Activated CD4-positive, alpha-beta memory T cell treated with anti-CD3 and anti-CD28 coated beads, Interleukin-2, amount 10 ng/mL, durations not matched to agents 7 days and 5 days (primary cell): ENCODE measurements at regions of chr12 and their contacts with region 1.

Region 1: GRCh38 chr12:100154474-100155247 is 12.0 kb upstream of the BLTP3B start:
- DNase-seq: peak; percentile 79
- H3K4me3 Mint-ChIP-seq: no peak overlapping the region
- H3K27ac Mint-ChIP-seq: peak overlapping the region; percentile 12
- H3K4me1 Mint-ChIP-seq: peaks cover 11% of the 10 kb centered on the region
- H3K27me3 Mint-ChIP-seq: no peaks in the 10 kb centered on the region

Region 2: DNA sequence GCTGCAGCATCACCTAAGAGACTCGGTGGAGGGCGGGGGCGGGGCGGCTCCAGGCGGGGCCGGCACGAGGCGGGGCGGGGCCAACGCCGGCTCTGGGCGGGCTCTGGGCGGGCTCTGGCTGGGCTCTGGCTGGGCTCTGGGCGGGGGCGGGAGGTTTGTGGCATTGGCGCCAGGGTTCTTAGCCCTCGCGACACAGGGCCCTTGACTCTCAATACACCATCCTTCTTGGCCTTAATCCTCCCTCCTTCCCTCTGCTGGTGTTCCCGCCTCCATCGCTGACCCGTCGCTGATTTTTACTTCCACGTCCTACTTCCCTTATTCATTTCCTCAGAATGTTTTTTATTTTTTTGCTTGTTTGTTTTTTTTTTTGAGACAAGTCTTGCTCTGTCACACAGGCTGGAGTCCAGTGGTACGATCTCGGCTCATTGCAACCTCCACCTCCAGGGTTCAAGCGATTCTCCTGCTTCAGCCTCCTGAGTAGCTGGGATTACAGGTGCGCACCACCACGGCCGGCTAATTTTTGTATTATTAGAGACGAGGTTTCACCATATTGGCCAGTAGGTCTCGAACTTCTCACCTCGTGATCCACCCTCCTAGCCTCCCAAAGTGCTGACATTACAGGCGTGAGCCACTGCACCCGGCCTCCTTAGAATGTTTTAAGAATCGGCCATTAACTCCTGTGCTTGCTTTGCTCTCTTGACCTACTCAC is 11.7 kb before region 1 on chr12 and contains the start of gene BLTP3B:
- CTCF ChIA-PET with region 1: interaction called, 39 read pairs
- POLR2A ChIA-PET with region 1: interaction called, 8 read pairs
- DNase-seq: peak; percentile 92
- H3K4me3 Mint-ChIP-seq: peak within 1 kb of the TSS; percentile 83
- H3K27ac Mint-ChIP-seq: peak within 1 kb of the TSS; percentile 95
- H3K4me1 Mint-ChIP-seq: peaks cover 43% of the 10 kb centered on the region
- H3K27me3 Mint-ChIP-seq: no peaks in the 10 kb centered on the region
- total RNA-seq, gene BLTP3B: 37.3 to 40.4 TPM

Region 3: DNA sequence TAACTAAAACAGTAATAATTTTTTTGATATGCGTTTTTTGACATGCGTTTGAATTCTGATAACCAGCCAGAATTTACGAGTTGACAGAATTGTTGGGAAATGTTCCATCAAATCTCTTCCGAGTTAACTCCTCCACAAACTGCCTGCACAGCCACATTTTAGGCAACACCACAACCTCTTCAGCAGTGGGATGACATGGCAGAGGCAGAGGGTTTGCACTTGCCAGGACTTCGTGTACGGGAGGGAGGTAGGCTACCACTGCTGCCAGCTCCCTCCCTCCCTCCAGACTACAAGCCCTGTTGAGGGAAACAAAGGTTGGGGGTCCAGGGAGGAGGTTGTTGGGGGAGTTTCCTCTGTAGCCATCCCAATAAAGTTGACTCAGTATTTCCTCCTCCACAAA is 31.4 kb after region 1 on chr12:
- CTCF ChIA-PET with region 1: interaction called, 10 read pairs
- POLR2A ChIA-PET with region 1: no interaction called
- DNase-seq: no peak
- H3K4me3 Mint-ChIP-seq: no peak overlapping the region
- H3K27ac Mint-ChIP-seq: no peak overlapping the region
- H3K4me1 Mint-ChIP-seq: peaks cover 32% of the 10 kb centered on the region
- H3K27me3 Mint-ChIP-seq: no peaks in the 10 kb centered on the region